ENCODE measurements at regions of chrX and their contacts with region 1.

Region 1: DNA sequence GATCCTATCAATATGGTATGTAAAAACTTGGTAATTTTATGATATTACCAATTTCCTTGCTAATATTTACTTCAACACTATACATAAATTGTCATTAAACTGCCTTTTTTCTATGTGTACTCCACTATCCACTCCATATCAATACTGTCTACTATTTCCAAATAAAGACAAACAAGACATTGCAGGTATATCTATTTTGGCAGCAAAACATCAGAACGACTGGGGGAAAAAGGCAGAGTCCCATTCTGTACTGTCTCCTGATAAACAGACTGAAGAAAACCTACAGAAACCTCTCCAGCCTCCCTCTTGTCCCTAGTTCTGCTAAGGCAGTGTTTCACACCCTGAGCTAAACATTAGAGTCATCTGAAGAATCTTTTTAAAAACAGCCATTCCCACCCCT is 96.6 kb downstream of the ATRX start:
- DNase-seq: no peak
- ATAC-seq: no peak
- H3K4me3 Mint-ChIP-seq: no peak overlapping the region
- H3K27ac Mint-ChIP-seq: no peak overlapping the region
- H3K4me1 Mint-ChIP-seq: peaks cover 8% of the 10 kb centered on the region
- H3K27me3 Mint-ChIP-seq: no peaks in the 10 kb centered on the region

Region 2: DNA sequence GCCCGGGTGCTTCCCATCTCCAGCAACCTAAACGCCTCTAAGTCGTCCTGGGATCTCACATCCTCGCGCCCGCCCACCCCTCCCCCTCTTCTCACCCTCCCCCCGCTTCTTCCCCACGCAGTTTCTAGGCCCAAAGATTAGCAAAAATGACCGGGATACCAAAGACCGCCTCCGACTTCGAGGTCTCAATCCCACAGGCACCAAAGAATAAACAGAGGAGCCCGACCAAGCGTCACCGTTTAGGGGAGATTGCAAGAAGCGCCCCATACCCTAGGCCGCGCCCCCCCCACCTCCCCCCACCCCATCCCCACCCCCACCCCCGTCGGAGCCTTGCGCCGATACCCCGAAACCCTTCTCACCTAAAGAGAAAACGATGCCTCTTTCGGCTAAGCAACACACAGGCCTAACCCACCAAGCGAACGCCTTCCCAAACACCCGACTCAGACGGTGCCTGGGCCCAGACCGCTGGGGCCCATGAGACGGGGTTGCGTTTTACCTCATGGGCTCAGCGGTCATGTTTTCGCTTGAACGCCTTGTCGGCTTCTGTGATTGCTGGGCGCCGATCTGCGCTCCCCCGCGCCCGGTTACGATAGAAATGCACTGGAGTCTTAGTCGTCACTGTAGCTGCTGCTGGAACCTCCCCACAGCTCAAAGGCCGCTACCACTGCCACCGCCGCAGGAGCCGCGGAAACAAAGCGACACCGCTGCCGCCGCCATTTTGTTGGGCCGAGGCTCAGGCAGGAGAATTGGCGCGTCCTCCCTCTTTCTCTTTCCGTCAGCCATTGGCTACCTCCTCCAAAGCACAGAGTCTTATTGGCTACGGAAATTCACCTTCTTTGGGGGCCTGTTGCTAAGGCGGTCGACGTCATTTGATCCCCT is 96.3 kb after region 1 on chrX and contains the start of gene ATRX:
- CTCF ChIA-PET with region 1: no interaction called
- POLR2A ChIA-PET with region 1: no interaction called
- intact Hi-C with region 1: loop called in 1 of 2 experiments (anchors 10 kb)
- DNase-seq: peak; percentile 84
- ATAC-seq: peak; percentile 91
- H3K4me3 Mint-ChIP-seq: peak within 1 kb of the TSS; percentile 91
- H3K27ac Mint-ChIP-seq: peak within 1 kb of the TSS; percentile 100
- H3K4me1 Mint-ChIP-seq: peaks cover 26% of the 10 kb centered on the region
- H3K27me3 Mint-ChIP-seq: no peaks in the 10 kb centered on the region
- total RNA-seq, gene ATRX: 52.1 to 70.6 TPM

Region 3: DNA sequence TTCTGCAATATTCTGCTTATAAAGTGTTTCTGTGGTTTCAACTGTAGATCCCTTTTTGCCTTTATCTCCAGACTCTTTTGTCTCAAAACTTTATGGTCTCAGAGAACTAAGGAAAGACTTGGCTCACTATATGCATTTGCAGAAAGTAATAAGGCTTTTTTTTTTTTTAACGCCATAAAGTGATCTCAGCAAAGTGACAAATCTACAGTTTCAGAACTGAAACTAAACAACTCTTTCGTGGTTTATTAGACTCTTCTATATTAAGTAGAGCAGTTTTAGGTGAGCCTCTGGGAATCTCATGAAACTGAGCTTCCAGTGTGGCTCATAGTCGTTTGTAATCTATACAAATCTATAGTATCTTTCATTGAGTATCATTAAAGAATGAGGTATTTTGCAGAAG is 236.4 kb after region 1 on chrX:
- CTCF ChIA-PET with region 1: no interaction called
- POLR2A ChIA-PET with region 1: no interaction called
- intact Hi-C with region 1: no loop called
- DNase-seq: no peak
- ATAC-seq: no peak
- H3K4me3 Mint-ChIP-seq: no peak overlapping the region
- H3K27ac Mint-ChIP-seq: no peak overlapping the region
- H3K4me1 Mint-ChIP-seq: peaks cover 7% of the 10 kb centered on the region
- H3K27me3 Mint-ChIP-seq: no peaks in the 10 kb centered on the region

Region 4: DNA sequence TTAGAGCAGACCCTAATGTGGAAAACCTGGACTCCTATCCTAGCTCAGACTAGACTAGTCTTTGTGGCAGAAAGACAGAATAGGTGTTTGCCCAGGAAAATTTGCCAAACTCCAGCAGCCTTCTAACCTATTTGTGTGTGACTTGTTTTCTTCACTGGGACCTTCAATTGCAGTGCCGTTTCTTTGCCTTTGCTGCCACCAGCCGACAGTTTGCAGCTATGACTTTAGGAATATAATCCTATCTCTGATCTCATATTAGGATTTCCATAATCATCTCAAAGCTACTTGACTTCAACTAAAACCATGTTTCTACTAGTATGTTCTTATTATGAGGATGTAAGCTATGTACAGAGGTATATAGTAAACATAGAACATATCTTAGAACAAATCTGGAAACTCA is 340.3 kb after region 1 on chrX:
- CTCF ChIA-PET with region 1: no interaction called
- POLR2A ChIA-PET with region 1: no interaction called
- intact Hi-C with region 1: loop called in 1 of 2 experiments (anchors 10 kb)
- DNase-seq: peak; percentile 33
- ATAC-seq: no peak
- H3K4me3 Mint-ChIP-seq: no peak overlapping the region
- H3K27ac Mint-ChIP-seq: no peak overlapping the region
- H3K4me1 Mint-ChIP-seq: peaks cover under 1% of the 10 kb centered on the region
- H3K27me3 Mint-ChIP-seq: no peaks in the 10 kb centered on the region

Measured in activated CD4-positive, alpha-beta T cell treated with anti-CD3 and anti-CD28 coated beads for 36 hours (primary cell).